PC-9 (cell line): ENCODE measurements at regions of chr3 and their contacts with region 1.

Region 1: GRCh38 chr3:37210230-37210629 is 35.8 kb upstream of the LRRFIP2 start:
- DNase-seq: no peak
- H3K4me3 ChIP-seq: no peak overlapping the region
- H3K27ac ChIP-seq: no peak overlapping the region
- H3K4me1 ChIP-seq: no peaks in the 10 kb centered on the region
- H3K27me3 ChIP-seq: no peaks in the 10 kb centered on the region
- CTCF ChIP-seq: no peak

Region 2: DNA sequence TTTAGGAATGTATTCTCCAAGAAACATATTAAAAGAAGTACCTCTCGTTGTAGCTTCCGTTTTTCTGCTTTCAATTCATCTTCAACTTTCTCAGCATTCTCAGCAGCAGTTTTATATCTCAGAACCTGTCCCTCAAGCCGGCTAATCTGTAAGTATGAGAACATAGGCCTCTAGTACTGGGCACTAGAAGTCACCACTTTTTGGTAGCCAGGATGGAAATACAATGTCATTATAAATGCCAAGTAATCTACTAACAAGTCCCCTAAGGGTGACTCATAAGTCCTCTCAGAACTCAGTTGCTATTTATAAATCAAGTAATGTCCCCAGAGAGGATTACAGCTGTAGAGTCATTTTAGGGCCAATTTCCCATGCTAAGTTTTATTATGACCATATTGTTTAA is 155.9 kb before region 1 on chr3:
- CTCF ChIA-PET with region 1: no interaction called
- POLR2A ChIA-PET with region 1: no interaction called
- intact Hi-C with region 1: loop called (anchors 10 kb)
- DNase-seq: no peak
- H3K4me3 ChIP-seq: no peak overlapping the region
- H3K27ac ChIP-seq: 0 out of 2 replicates have a peak overlapping the region, but pooled peaks have one; percentile 19
- H3K4me1 ChIP-seq: no peaks in the 10 kb centered on the region
- H3K27me3 ChIP-seq: no peaks in the 10 kb centered on the region
- CTCF ChIP-seq: no peak

Region 3: DNA sequence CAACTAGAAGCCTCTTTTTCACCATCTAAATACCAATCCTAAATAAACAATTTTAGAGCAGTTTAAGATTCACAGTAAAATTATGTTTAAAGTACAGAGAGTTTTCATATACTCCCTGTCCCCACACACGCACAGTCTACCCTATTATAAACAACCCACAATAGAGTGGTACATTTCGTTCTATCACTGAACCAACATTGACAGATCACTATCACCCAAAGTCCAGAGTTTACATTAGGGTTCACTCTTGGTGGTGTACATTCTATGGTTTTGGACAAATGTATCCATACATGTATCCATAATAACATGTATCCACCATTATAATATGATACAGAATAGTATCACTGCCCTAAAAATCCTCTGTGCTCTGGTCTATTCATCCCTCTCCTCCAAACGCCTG is 127.9 kb before region 1 on chr3:
- CTCF ChIA-PET with region 1: no interaction called
- POLR2A ChIA-PET with region 1: no interaction called
- intact Hi-C with region 1: loop called (anchors 5 kb)
- DNase-seq: no peak
- H3K4me3 ChIP-seq: no peak overlapping the region
- H3K27ac ChIP-seq: no peak overlapping the region
- H3K4me1 ChIP-seq: no peaks in the 10 kb centered on the region
- H3K27me3 ChIP-seq: no peaks in the 10 kb centered on the region
- CTCF ChIP-seq: no peak